ENCODE measurements at regions of chr16 and their contacts with region 1.

Region 1: GRCh38 chr16:85010931-85011845 is at the start of gene ZDHHC7:
- DNase-seq: peak; percentile 78 to 92 (median 86)
- ATAC-seq: peak; percentile 93 to 94
- H3K4me3 Mint-ChIP-seq: peak within 1 kb of the TSS; percentile 95 to 99 (median 97)
- H3K27ac Mint-ChIP-seq: peak within 1 kb of the TSS; percentile 98 to 100 (median 99)
- H3K4me1 Mint-ChIP-seq: peaks cover 20 to 55% (median 45%) of the 10 kb centered on the region in 4 donors
- H3K27me3 Mint-ChIP-seq: no peaks in the 10 kb centered on the region
- polyA plus RNA-seq, gene ZDHHC7: 28.8 to 45.3 (median 37.7) TPM

Region 2: DNA sequence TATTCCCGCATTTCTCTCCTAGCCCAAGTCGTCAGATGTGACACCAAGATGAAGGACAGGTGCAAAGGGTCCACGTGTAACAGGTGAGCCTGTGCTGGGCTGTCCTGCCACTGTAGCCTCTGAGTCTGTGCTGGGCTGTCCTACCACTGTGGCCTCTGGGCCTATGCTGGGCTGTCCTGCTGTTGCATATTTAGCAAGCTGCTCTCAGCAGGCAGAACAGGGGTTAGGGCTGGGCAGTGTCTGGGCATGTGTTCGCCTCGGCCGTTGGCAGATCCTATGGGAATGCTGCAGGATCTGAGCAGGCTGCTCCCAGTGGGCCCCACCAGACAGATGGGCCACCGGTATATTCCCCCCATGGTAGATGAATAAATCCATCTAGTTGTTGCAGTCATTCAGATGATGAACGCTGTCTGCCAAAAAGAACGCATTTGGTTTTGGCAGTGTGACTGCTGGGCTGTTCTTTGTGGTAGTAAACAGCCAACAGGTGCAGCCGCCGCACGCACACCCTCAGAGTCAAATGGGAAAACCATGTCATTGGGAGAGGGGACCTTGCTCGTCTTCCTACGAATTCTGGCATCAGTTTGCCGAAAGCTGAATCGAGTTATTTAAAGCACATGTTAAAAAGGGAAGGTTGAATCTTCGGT is 142.2 kb before region 1 on chr16:
- POLR2A ChIA-PET with region 1: no interaction called
- DNase-seq: no peak
- ATAC-seq: no peak
- H3K4me3 Mint-ChIP-seq: no peak overlapping the region
- H3K27ac Mint-ChIP-seq: no peak overlapping the region
- H3K4me1 Mint-ChIP-seq: no peaks in the 10 kb centered on the region
- H3K27me3 Mint-ChIP-seq: peaks cover 2 to 13% (median 3%) of the 10 kb centered on the region in 5 donors

Region 3: GRCh38 chr16:84925092-84925772 is 86.0 kb before region 1 on chr16:
- POLR2A ChIA-PET with region 1: no interaction called
- DNase-seq: peak; percentile 30 to 80 (median 58)
- ATAC-seq: peak; percentile 57 to 65
- H3K4me3 Mint-ChIP-seq: no peak overlapping the region
- H3K27ac Mint-ChIP-seq: no peak overlapping the region
- H3K4me1 Mint-ChIP-seq: peaks cover 0 to 8% (median 5%) of the 10 kb centered on the region in 4 donors
- H3K27me3 Mint-ChIP-seq: peaks cover 0 to 7% (median 0%) of the 10 kb centered on the region in 5 donors

Region 4: GRCh38 chr16:85055503-85056210 is 44.5 kb after region 1 on chr16:
- POLR2A ChIA-PET with region 1: interaction called, 24 read pairs
- DNase-seq: peak; percentile 40 to 92 (median 76)
- ATAC-seq: peak; percentile 90 to 96
- H3K4me3 Mint-ChIP-seq: peak overlapping the region; percentile 77 to 92 (median 82)
- H3K27ac Mint-ChIP-seq: peak overlapping the region; percentile 92 to 99 (median 96)
- H3K4me1 Mint-ChIP-seq: peaks cover 27 to 79% (median 46%) of the 10 kb centered on the region in 4 donors
- H3K27me3 Mint-ChIP-seq: no peaks in the 10 kb centered on the region